Activated CD4-positive, alpha-beta memory T cell treated with anti-CD3 and anti-CD28 coated beads for 36 hours (primary cell): ENCODE measurements at regions of chr19 and their contacts with region 1.

Region 1: DNA sequence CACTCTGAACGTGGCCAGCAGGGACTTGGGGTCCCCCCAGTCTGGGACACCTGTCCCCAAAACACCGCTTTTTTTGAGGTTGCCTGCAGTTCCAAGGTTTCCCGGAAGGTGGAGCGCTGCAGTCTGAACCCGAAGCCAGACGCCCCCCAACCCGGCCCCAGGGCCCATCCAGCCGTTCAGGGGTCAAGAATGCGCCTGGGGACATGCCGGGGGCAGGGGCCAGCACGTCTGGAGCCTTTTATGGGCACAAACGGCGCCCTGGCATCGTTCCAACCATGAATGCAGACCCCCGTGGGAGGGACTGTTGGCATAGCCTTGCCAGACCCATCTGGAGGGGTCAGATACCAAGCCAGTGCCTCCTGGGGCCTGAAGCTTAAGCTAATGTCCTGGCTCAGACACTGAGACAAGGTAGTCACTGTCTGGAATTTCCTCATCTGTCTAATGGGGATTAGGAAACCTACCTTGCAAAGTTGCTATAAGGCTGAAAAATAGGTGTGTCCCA is 6.9 kb downstream of the S1PR5 start:
- DNase-seq: peak; percentile 72
- H3K4me3 Mint-ChIP-seq: no peak overlapping the region
- H3K27ac Mint-ChIP-seq: no peak overlapping the region
- H3K4me1 Mint-ChIP-seq: peaks cover 15% of the 10 kb centered on the region
- H3K27me3 Mint-ChIP-seq: peaks cover 23% of the 10 kb centered on the region

Region 2: DNA sequence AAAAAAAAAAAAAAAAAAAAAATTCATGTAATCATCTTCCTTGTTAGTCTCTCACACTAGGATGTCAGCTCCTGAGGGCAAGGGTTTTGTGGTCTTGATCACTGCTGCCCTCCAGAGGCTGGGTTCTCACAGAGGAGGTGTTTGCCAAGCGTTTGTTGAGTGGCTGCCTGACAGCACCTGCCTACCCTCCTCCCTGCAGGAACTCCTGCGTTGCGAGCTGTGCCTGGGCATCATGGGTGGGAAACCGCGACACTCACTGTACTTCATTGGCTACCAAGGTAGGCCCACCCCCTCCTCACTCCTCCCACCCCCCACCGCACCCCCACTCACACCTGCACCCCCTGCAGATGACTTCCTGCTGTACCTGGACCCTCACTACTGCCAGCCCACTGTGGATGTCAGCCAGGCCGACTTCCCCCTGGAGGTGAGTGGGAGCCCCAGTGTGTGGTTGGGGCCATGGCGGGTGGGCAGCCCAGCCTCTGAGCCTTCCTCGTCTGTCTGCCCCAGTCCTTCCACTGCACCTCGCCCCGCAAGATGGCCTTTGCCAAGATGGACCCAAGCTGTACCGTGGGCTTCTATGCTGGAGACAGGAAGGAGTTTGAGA is 41.4 kb after region 1 on chr19:
- CTCF ChIA-PET with region 1: interaction called, 13 read pairs
- POLR2A ChIA-PET with region 1: no interaction called
- intact Hi-C with region 1: no loop called
- DNase-seq: peak; percentile 67
- H3K4me3 Mint-ChIP-seq: no peak overlapping the region
- H3K27ac Mint-ChIP-seq: no peak overlapping the region
- H3K4me1 Mint-ChIP-seq: peaks cover 33% of the 10 kb centered on the region
- H3K27me3 Mint-ChIP-seq: no peaks in the 10 kb centered on the region

Region 3: GRCh38 chr19:10593820-10594637 is 83.7 kb after region 1 on chr19:
- CTCF ChIA-PET with region 1: no interaction called
- POLR2A ChIA-PET with region 1: no interaction called
- intact Hi-C with region 1: no loop called
- DNase-seq: no peak
- H3K4me3 Mint-ChIP-seq: no peak overlapping the region
- H3K27ac Mint-ChIP-seq: no peak overlapping the region
- H3K4me1 Mint-ChIP-seq: peaks cover 18% of the 10 kb centered on the region
- H3K27me3 Mint-ChIP-seq: no peaks in the 10 kb centered on the region